Activated CD4-positive, alpha-beta T cell treated with anti-CD3 and anti-CD28 coated beads, Interleukin-2, amount 10 ng/mL, durations not matched to agents 24 days and 14 days (primary cell): ENCODE measurements at regions of chr21 and their contacts with region 1.

Region 1: DNA sequence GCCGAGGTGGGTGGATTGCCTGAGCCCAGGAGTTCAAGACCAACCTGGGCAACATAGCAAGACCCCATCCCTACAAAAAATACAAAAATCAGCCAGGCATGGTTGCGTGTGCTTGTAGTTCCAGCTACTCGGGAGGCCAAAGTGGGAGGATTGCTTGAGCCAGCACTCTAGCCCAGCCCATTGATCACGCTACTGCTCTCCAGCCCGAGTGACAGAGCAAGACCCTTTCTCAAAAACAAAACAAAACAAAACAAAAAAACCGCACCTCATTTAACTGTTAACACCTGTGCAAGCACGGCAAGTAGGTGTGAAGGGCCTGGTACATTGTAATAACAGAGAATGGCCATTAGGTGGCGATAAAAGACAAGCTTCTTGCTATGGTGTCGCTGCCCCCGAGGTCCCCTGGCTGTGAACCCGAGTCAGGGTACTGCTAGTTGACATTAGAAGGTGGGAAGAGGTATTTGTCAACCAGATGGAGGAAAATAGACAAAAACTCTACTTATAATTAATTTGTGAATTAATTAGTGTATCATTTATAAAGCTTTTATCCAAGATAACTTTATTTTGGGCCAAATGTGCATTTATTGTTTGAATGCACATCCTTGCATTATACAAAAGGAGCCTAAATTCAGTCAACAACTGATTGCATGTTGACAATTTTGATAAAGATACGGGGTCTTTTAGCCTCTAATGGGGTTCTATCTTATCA is 66.5 kb downstream of the SH3BGR start:
- DNase-seq: peak; percentile 80
- H3K4me3 Mint-ChIP-seq: no peak overlapping the region
- H3K27ac Mint-ChIP-seq: no peak overlapping the region
- H3K4me1 Mint-ChIP-seq: no peaks in the 10 kb centered on the region
- H3K27me3 Mint-ChIP-seq: peaks cover 3% of the 10 kb centered on the region

Region 2: GRCh38 chr21:40120940-40121575 is 602.8 kb after region 1 on chr21:
- intact Hi-C with region 1: loop called (anchors 5 kb)
- DNase-seq: no peak
- H3K4me3 Mint-ChIP-seq: no peak overlapping the region
- H3K27ac Mint-ChIP-seq: no peak overlapping the region
- H3K4me1 Mint-ChIP-seq: no peaks in the 10 kb centered on the region
- H3K27me3 Mint-ChIP-seq: no peaks in the 10 kb centered on the region